Common myeloid progenitor, CD34-positive (primary cell): ENCODE measurements at regions of chr1 and their contacts with region 1.

Region 1: GRCh38 chr1:203216274-203217138 is 13.0 kb downstream of the CHIT1 start:
- DNase-seq: peak; percentile 74 to 86 (median 77)
- H3K4me3 ChIP-seq: no peak overlapping the region
- H3K27ac ChIP-seq: no peak overlapping the region
- H3K4me1 ChIP-seq: peaks cover 0 to 19% (median 9%) of the 10 kb centered on the region in 4 experiments
- H3K27me3 ChIP-seq: peaks cover 0 to 13% (median 0%) of the 10 kb centered on the region in 5 experiments

Region 2: GRCh38 chr1:203031467-203031866 is 185.0 kb before region 1 on chr1:
- CTCF ChIA-PET with region 1: interaction called, 25 read pairs
- POLR2A ChIA-PET with region 1: no interaction called
- DNase-seq: peak in 1 of 3 donors; percentile 38
- H3K4me3 ChIP-seq: no peak overlapping the region
- H3K27ac ChIP-seq: no peak overlapping the region
- H3K4me1 ChIP-seq: peaks cover 0 to 10% (median 6%) of the 10 kb centered on the region in 4 experiments
- H3K27me3 ChIP-seq: peaks cover 3 to 25% (median 20%) of the 10 kb centered on the region in 5 experiments

Region 3: DNA sequence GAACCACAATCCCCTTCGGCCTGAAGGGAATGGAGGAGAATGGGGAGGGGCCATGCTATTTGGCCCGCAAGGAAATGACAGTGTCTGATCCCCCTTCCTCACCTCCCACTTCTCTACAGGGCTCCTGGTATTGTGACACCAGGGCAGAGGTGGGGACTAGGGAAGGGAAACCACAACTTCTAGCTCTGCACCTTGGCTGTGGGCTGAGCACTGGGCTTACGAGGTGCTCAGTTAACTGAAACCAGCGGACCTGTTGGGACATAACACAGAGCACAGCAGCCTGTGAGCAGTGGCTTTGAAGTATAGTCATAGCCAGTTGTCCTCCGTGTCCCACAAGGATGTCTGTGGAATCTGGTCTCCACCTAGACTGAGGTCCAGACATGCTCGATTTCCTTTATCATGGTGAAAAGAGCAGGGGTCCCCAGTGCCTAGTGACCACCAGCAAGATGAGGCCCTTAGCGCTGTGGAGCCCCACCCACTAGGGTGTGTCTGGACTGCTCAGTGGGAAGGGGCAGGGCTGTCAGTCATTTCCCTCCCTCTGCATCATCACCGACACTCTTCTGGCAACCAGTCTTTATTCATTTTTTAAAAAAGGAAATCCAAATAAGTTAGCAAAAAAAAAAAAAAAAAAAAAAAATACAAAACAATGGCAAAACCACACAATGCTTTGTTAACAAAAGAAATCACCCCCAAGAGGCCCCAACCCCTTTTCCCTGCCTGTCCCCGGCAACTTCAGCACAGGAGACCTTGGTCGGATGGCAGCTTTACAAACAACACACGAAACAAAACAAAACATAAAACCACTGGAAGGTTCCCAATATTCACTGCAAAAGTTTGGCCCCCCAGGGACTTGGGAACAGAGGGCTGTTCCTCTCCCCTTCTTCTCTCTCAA is 133.7 kb before region 1 on chr1:
- CTCF ChIA-PET with region 1: no interaction called
- POLR2A ChIA-PET with region 1: no interaction called
- DNase-seq: no peak
- H3K4me3 ChIP-seq: peak overlapping the region in 2 of 7 experiments; percentile 6 to 7
- H3K27ac ChIP-seq: no peak overlapping the region
- H3K4me1 ChIP-seq: peaks cover 0 to 7% (median 4%) of the 10 kb centered on the region in 4 experiments
- H3K27me3 ChIP-seq: peaks cover 0 to 12% (median 0%) of the 10 kb centered on the region in 5 experiments

Region 4: GRCh38 chr1:203133970-203134725 is 82.4 kb before region 1 on chr1:
- CTCF ChIA-PET with region 1: interaction called, 11 read pairs
- POLR2A ChIA-PET with region 1: no interaction called
- DNase-seq: peak in 1 of 3 donors; percentile 18
- H3K4me3 ChIP-seq: no peak overlapping the region
- H3K27ac ChIP-seq: no peak overlapping the region
- H3K4me1 ChIP-seq: peaks cover 4 to 15% (median 10%) of the 10 kb centered on the region in 4 experiments
- H3K27me3 ChIP-seq: peaks cover 0 to 25% (median 17%) of the 10 kb centered on the region in 5 experiments

Region 5: GRCh38 chr1:203172128-203173010 is 44.1 kb before region 1 on chr1:
- CTCF ChIA-PET with region 1: interaction called, 34 read pairs
- POLR2A ChIA-PET with region 1: no interaction called
- DNase-seq: peak; percentile 42 to 61 (median 43)
- H3K4me3 ChIP-seq: no peak overlapping the region
- H3K27ac ChIP-seq: no peak overlapping the region
- H3K4me1 ChIP-seq: peaks cover 0 to 13% (median 2%) of the 10 kb centered on the region in 4 experiments
- H3K27me3 ChIP-seq: peaks cover 0 to 5% (median 0%) of the 10 kb centered on the region in 5 experiments

Region 6: GRCh38 chr1:203229471-203230135 is 13.1 kb after region 1 on chr1 and contains the start of gene CHIT1:
- CTCF ChIA-PET with region 1: interaction called, 27 read pairs
- POLR2A ChIA-PET with region 1: no interaction called
- DNase-seq: no peak
- H3K4me3 ChIP-seq: no peak within 1 kb of the TSS
- H3K27ac ChIP-seq: no peak within 1 kb of the TSS
- H3K4me1 ChIP-seq: peaks cover 0 to 7% (median 2%) of the 10 kb centered on the region in 4 experiments
- H3K27me3 ChIP-seq: no peaks in the 10 kb centered on the region

Region 7: DNA sequence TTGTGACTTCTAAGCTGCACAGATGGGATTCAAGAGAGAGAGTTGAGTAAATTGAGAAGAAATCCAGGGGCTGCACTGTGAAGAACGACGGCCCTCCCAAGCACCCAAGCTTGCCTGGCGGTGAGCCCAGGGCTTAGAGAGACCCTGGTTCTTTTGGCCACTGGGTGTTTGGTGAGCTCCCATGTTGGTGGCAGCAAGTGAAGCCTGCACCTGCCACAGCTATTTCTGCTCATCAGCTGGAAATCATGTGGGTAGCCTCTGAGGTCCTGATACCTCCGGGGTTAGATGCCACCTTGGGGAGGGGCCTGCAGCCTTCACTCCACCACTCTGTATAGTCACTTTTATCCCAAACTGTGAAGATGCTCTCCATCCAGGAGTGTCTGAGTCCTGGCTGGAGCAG is 82.7 kb after region 1 on chr1:
- CTCF ChIA-PET with region 1: no interaction called
- POLR2A ChIA-PET with region 1: no interaction called
- DNase-seq: no peak
- H3K4me3 ChIP-seq: no peak overlapping the region
- H3K27ac ChIP-seq: no peak overlapping the region
- H3K4me1 ChIP-seq: peaks cover 20 to 58% (median 39%) of the 10 kb centered on the region in 4 experiments
- H3K27me3 ChIP-seq: no peaks in the 10 kb centered on the region

Region 8: GRCh38 chr1:203338335-203339036 is 122.0 kb after region 1 on chr1:
- CTCF ChIA-PET with region 1: no interaction called
- POLR2A ChIA-PET with region 1: no interaction called
- DNase-seq: peak; percentile 77 to 83 (median 77)
- H3K4me3 ChIP-seq: no peak overlapping the region
- H3K27ac ChIP-seq: no peak overlapping the region
- H3K4me1 ChIP-seq: peaks cover 0 to 5% (median 0%) of the 10 kb centered on the region in 4 experiments
- H3K27me3 ChIP-seq: peaks cover 0 to 22% (median 10%) of the 10 kb centered on the region in 5 experiments